OCI-LY7 (cell line): ENCODE measurements at regions of chr12 and their contacts with region 1.

Region 1: GRCh38 chr12:51323991-51324930 is at the start of gene BIN2:
- DNase-seq: peak; percentile 87
- H3K4me3 ChIP-seq: peak within 1 kb of the TSS; percentile 67
- H3K27ac ChIP-seq: peak within 1 kb of the TSS; percentile 24
- H3K4me1 ChIP-seq: peaks cover 80% of the 10 kb centered on the region
- CTCF ChIP-seq: no peak
- total RNA-seq, gene BIN2: 0.31 and 0.88 TPM in 2 replicates

Region 2: DNA sequence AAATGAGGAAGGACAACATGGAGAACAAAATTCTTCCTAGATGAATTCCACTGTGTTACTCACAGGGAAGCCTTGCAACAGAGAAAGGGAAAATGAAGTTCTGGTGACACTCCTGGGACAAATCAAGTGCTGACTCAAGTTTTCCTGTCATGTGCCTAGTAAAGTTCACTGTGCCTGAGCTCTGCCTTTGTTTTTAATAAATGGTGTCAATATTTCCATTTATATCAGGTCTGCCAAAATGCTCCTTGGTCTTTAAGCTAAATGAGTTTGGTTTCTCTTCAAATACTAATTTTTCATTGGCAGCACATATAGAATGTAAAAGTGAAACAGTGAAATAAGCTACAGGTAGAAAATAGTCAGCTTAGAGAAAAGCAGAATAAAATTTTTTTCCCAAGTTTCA is 338.9 kb before region 1 on chr12:
- CTCF ChIA-PET with region 1: no interaction called
- POLR2A ChIA-PET with region 1: no interaction called
- intact Hi-C with region 1: no loop called
- DNase-seq: no peak
- H3K4me3 ChIP-seq: no peak overlapping the region
- H3K27ac ChIP-seq: no peak overlapping the region
- H3K4me1 ChIP-seq: no peaks in the 10 kb centered on the region
- CTCF ChIP-seq: no peak

Region 3: DNA sequence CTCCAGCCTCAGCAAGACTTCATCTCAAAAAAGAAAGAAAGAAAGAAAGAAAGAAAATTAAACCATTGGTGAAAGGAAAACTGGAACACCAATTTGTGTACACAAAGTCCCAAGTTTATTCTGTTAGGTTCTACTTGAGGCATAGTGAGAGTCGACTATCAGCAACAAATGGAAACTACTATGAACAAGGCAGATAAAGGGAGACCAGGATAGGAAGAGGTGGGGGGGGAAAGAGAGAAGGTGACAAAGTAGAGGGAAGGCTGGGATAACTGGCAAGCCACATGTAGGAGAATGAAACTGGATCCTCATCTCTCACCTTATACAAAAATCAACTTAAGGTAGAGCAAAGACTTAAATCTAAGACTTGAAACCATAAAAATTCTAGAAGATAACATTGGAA is 177.0 kb before region 1 on chr12:
- CTCF ChIA-PET with region 1: no interaction called
- POLR2A ChIA-PET with region 1: no interaction called
- intact Hi-C with region 1: no loop called
- DNase-seq: no peak
- H3K4me3 ChIP-seq: no peak overlapping the region
- H3K27ac ChIP-seq: no peak overlapping the region
- H3K4me1 ChIP-seq: no peaks in the 10 kb centered on the region
- CTCF ChIP-seq: no peak

Region 4: GRCh38 chr12:51270067-51270970 is 53.9 kb before region 1 on chr12 and contains the start of gene SMAGP:
- CTCF ChIA-PET with region 1: interaction called, 3 read pairs
- POLR2A ChIA-PET with region 1: interaction called, 4 read pairs
- intact Hi-C with region 1: loop called (anchors 2 kb)
- DNase-seq: peak; percentile 66
- H3K4me3 ChIP-seq: peak within 1 kb of the TSS; percentile 70
- H3K27ac ChIP-seq: no peak within 1 kb of the TSS
- H3K4me1 ChIP-seq: peaks cover 8% of the 10 kb centered on the region
- CTCF ChIP-seq: no peak; the same call in 1 of the 2 replicates
- total RNA-seq, gene SMAGP: not detected in 2 replicates

Region 5: GRCh38 chr12:51368640-51369517 is 44.6 kb after region 1 on chr12:
- CTCF ChIA-PET with region 1: no interaction called
- POLR2A ChIA-PET with region 1: no interaction called
- intact Hi-C with region 1: loop called (anchors 2 kb)
- DNase-seq: peak; percentile 95
- H3K4me3 ChIP-seq: peak overlapping the region; percentile 8
- H3K27ac ChIP-seq: no peak overlapping the region
- H3K4me1 ChIP-seq: peaks cover 21% of the 10 kb centered on the region
- CTCF ChIP-seq: no peak

Region 6: GRCh38 chr12:51381226-51382079 is 57.2 kb after region 1 on chr12:
- CTCF ChIA-PET with region 1: no interaction called
- POLR2A ChIA-PET with region 1: no interaction called
- intact Hi-C with region 1: no loop called
- DNase-seq: no peak
- H3K4me3 ChIP-seq: no peak overlapping the region
- H3K27ac ChIP-seq: no peak overlapping the region
- H3K4me1 ChIP-seq: peaks cover 8% of the 10 kb centered on the region
- CTCF ChIP-seq: no peak